ENCODE measurements at regions of chr5 and their contacts with region 1.

Region 1: GRCh38 chr5:174618032-174618324 is 106.4 kb upstream of the MSX2 start:
- DNase-seq: peak in 1 of 2 experiments; percentile 44
- H3K4me3 ChIP-seq: no peak overlapping the region
- H3K4me3 Mint-ChIP-seq: peak overlapping the region; percentile 4
- H3K27ac Mint-ChIP-seq: peak overlapping the region; percentile 63
- H3K4me1 ChIP-seq: peaks cover 76% of the 10 kb centered on the region
- H3K4me1 Mint-ChIP-seq: peaks cover 64% of the 10 kb centered on the region
- H3K27me3 ChIP-seq: no peaks in the 10 kb centered on the region
- H3K27me3 Mint-ChIP-seq: no peaks in the 10 kb centered on the region
- CTCF ChIP-seq: no peak

Region 2: GRCh38 chr5:174166231-174167079 is 451.5 kb before region 1 on chr5:
- CTCF ChIA-PET with region 1: no interaction called
- POLR2A ChIA-PET with region 1: no interaction called
- intact Hi-C with region 1: no loop called
- DNase-seq: no peak
- H3K4me3 ChIP-seq: no peak overlapping the region
- H3K4me3 Mint-ChIP-seq: no peak overlapping the region
- H3K27ac Mint-ChIP-seq: no peak overlapping the region
- H3K4me1 ChIP-seq: no peaks in the 10 kb centered on the region
- H3K4me1 Mint-ChIP-seq: no peaks in the 10 kb centered on the region
- H3K27me3 ChIP-seq: 0 out of 2 replicates have a peak, but pooled peaks cover 1% of the 10 kb centered on the region
- H3K27me3 Mint-ChIP-seq: peaks cover 8% of the 10 kb centered on the region
- CTCF ChIP-seq: no peak

Region 3: DNA sequence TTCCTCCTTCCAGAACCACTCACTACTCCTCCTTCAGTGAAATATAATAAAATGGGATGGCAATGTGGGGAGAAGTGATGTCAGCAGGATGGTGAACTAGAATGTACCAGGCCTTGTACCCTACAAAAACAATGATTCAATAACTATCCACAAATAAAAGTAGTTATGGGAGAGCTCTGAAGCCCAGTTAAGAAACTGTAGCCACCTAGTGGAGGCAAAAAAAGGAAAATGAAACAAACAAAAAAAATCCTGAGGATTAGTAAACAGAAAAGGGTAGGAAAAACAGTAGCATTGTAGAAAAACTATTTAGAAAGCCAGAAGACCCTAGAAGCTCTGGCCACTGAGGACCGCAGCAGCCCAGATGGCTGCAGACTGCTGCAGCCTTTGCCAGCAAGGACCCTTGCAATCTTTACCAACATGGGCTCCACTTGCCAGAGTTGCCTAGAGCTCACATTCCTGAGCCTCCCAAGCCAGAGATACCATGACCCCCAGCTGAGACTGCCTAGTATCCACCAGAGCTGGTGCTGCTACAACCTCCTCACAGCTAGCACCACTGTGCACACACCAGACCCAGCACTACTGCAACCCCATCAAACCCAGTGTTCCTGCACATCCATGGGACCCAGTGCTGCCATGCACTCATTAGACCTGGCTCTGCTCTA is 153.3 kb before region 1 on chr5:
- CTCF ChIA-PET with region 1: no interaction called
- POLR2A ChIA-PET with region 1: no interaction called
- intact Hi-C with region 1: loop called (anchors 1 kb)
- DNase-seq: no peak
- H3K4me3 ChIP-seq: no peak overlapping the region
- H3K4me3 Mint-ChIP-seq: no peak overlapping the region
- H3K27ac Mint-ChIP-seq: no peak overlapping the region
- H3K4me1 ChIP-seq: peaks cover 44% of the 10 kb centered on the region
- H3K4me1 Mint-ChIP-seq: peaks cover 35% of the 10 kb centered on the region
- H3K27me3 ChIP-seq: no peaks in the 10 kb centered on the region
- H3K27me3 Mint-ChIP-seq: no peaks in the 10 kb centered on the region
- CTCF ChIP-seq: peak; percentile 32 to 51

Region 4: DNA sequence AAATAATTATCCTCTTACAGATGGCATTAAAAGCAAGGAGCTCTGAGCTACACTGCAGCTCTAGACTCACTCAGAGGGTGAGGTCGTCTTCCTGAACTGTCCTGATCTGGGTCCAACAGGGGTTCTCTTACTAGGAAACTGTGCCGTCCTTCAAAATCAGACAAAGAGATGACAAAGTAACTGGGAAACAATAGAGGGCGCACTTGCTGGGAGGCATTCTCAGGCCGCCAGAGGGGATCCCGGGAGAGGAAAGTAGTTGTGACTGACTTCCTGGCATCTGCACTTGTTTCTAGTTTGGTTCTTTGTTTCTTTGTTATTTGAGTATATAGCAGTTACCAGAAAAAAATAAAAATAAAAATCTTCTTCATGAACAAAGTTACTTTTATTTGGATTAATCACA is 36.5 kb before region 1 on chr5:
- CTCF ChIA-PET with region 1: interaction called, 3 read pairs
- POLR2A ChIA-PET with region 1: no interaction called
- intact Hi-C with region 1: loop called (anchors 2 kb)
- DNase-seq: peak; percentile 61 to 72
- H3K4me3 ChIP-seq: no peak overlapping the region
- H3K4me3 Mint-ChIP-seq: no peak overlapping the region
- H3K27ac Mint-ChIP-seq: no peak overlapping the region
- H3K4me1 ChIP-seq: peaks cover 9% of the 10 kb centered on the region; the same call in 1 of the 2 replicates
- H3K4me1 Mint-ChIP-seq: peaks cover 16% of the 10 kb centered on the region
- H3K27me3 ChIP-seq: no peaks in the 10 kb centered on the region
- H3K27me3 Mint-ChIP-seq: no peaks in the 10 kb centered on the region
- CTCF ChIP-seq: peak; percentile 68 to 70

Region 5: GRCh38 chr5:174642488-174643291 is 24.7 kb after region 1 on chr5:
- CTCF ChIA-PET with region 1: no interaction called
- POLR2A ChIA-PET with region 1: no interaction called
- intact Hi-C with region 1: loop called (anchors 1 kb)
- DNase-seq: peak; percentile 72 to 73
- H3K4me3 ChIP-seq: no peak overlapping the region
- H3K4me3 Mint-ChIP-seq: peak overlapping the region; percentile 25
- H3K27ac Mint-ChIP-seq: peak overlapping the region; percentile 61
- H3K4me1 ChIP-seq: peaks cover 40% of the 10 kb centered on the region
- H3K4me1 Mint-ChIP-seq: peaks cover 48% of the 10 kb centered on the region
- H3K27me3 ChIP-seq: no peaks in the 10 kb centered on the region
- H3K27me3 Mint-ChIP-seq: no peaks in the 10 kb centered on the region
- CTCF ChIP-seq: no peak

Region 6: DNA sequence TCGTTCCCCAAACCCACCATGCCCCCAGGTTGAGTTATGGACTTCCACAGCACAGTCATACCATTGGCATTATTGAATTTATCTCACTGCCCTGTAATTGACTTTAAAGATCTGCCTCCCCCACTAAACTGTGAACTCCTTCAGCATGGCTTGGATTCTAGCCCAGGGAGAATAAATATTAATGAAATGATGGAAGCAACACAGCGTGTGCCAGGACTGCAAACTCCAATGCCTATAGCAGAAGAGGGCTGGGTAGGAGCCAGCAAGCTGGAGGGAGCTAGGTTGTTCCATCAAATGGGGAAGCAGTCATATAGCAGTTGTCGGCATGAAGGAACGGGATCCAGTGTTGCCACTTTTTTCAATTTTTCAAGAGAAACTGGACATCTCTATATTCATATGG is 37.4 kb after region 1 on chr5:
- CTCF ChIA-PET with region 1: no interaction called
- POLR2A ChIA-PET with region 1: no interaction called
- intact Hi-C with region 1: no loop called
- DNase-seq: no peak
- H3K4me3 ChIP-seq: no peak overlapping the region
- H3K4me3 Mint-ChIP-seq: no peak overlapping the region
- H3K27ac Mint-ChIP-seq: no peak overlapping the region
- H3K4me1 ChIP-seq: no peaks in the 10 kb centered on the region
- H3K4me1 Mint-ChIP-seq: peaks cover 11% of the 10 kb centered on the region
- H3K27me3 ChIP-seq: no peaks in the 10 kb centered on the region
- H3K27me3 Mint-ChIP-seq: no peaks in the 10 kb centered on the region
- CTCF ChIP-seq: no peak

Region 7: DNA sequence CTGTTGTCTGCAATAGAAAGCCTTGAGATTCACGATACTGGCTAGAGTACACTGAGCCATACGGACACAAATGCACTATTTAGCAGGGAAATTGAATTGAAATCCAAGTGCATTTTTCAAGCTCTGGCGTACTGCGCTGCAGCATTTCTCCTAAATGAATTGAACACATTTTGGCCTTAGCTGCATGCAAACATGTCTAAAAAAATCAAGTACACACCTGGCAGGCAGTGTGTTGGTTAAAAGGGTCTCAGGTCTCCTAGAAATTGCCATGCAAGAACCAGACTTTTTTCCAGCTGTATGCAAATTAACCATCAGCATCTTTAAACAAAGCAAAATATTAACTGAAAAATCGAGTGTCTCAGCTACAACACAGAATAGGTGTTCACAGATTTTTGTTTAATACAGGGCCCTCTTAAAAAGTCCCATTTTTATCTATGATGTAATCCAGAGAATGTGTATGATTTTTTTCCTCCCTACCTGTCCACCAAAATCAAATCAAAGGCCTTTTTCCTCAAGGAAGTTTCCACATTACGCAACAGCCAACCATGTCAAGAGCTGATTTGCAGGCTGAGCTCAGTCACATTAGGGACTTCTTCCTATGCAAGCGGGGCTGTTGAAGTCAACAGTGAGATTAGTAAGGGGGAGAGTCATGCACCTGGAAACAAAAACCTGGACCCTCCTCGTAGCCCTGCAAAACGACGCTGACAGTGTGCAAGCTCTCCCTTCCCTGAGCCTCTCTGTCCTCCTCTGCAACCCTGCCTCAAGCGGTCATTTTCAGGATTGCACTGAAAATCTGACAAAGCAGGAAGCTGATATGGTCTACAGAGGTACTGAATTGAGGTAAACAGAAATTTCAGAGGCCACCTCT is 846.3 kb after region 1 on chr5:
- CTCF ChIA-PET with region 1: no interaction called
- POLR2A ChIA-PET with region 1: no interaction called
- intact Hi-C with region 1: no loop called
- DNase-seq: peak; percentile 74 to 82
- H3K4me3 ChIP-seq: no peak overlapping the region
- H3K4me3 Mint-ChIP-seq: peak overlapping the region; percentile 49
- H3K27ac Mint-ChIP-seq: no peak overlapping the region
- H3K4me1 ChIP-seq: peaks cover 14% of the 10 kb centered on the region
- H3K4me1 Mint-ChIP-seq: peaks cover 18% of the 10 kb centered on the region
- H3K27me3 ChIP-seq: no peaks in the 10 kb centered on the region
- H3K27me3 Mint-ChIP-seq: no peaks in the 10 kb centered on the region
- CTCF ChIP-seq: peak; percentile 80 to 83

Measured in Caco-2 (cell line).